Activated CD4-positive, alpha-beta T cell treated with anti-CD3 and anti-CD28 coated beads for 36 hours (primary cell): ENCODE measurements at regions of chr10 and their contacts with region 1.

Region 1: DNA sequence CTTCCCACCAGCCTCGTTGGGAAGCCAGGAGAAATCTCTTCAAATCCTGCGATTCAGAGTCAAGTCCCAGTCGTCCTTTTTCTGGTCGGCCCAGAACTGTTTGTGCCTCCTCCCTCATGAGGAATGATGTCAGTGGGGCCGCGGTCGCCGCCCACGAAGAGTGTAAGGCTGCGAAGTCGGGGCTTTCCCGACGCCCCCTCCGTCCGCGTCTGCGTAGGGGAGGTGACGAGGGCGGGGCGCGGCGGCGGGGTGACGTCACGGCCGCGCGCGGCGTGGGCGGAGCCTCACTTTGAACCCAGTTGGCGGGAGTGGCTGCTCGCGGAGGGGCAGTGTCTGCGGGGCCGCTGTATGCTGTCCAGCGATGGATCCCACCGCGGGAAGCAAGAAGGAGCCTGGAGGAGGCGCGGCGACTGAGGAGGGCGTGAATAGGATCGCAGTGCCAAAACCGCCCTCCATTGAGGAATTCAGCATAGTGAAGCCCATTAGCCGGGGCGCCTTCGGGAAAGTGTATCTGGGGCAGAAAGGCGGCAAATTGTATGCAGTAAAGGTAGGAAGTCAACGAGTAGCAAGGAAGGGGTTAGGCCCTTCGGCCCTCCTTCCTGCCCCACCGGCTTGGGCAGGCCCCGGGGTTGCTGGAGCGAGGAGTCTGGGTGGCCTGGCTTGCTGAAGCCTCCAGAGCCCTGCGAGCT is at the start of gene MASTL:
- DNase-seq: peak; percentile 97
- ATAC-seq: peak; percentile 77
- H3K4me3 Mint-ChIP-seq: peak within 1 kb of the TSS; percentile 94
- H3K27ac Mint-ChIP-seq: peak within 1 kb of the TSS; percentile 99
- H3K4me1 Mint-ChIP-seq: peaks cover 34% of the 10 kb centered on the region
- H3K27me3 Mint-ChIP-seq: no peaks in the 10 kb centered on the region
- total RNA-seq, gene MASTL: 42.1 to 55.3 TPM

Region 2: DNA sequence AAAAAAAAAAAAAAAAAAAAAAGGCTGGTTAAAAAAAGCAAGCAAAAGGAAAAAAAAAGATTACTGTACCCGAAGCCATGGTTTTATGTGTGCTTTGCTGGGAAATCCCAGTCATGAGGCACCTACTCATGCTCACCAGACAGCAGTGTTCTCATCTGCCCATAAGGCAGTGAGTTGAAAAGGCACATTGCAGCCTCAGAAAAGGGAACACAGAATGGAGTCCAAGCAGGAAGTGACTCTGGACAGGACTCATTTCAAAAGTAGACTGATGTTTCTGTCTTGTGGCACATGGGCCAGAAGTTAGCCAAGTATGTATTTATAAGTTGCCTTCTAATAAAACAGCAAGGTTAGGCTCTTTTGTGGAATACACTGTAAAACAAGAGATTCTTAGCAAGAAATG is 417.5 kb before region 1 on chr10:
- CTCF ChIA-PET with region 1: no interaction called
- POLR2A ChIA-PET with region 1: no interaction called
- intact Hi-C with region 1: loop called (anchors 5 to 10 kb)
- DNase-seq: peak; percentile 72
- ATAC-seq: peak; percentile 89
- H3K4me3 Mint-ChIP-seq: no peak overlapping the region
- H3K27ac Mint-ChIP-seq: peak overlapping the region; percentile 96
- H3K4me1 Mint-ChIP-seq: peaks cover 47% of the 10 kb centered on the region
- H3K27me3 Mint-ChIP-seq: no peaks in the 10 kb centered on the region

Region 3: DNA sequence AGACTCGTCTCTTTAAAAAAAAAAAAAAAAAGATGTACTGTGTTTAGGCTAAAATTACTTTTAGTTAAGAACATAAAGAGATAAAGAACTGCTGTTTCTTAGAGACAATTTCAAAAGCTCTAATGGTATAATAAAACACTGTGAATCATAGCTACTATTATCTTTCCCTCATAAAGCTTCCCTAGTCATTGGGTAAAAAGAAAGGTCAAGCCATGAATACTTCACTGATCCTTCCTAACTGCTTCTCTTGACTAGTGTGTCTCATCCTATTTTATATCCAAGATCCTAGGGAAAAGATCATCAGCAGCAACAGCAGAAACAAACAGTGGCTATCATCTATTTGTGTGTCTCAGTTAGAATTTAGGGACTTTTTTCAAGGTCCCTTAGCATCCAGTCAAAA is 11.5 kb before region 1 on chr10:
- CTCF ChIA-PET with region 1: interaction called, 10 read pairs
- POLR2A ChIA-PET with region 1: interaction called, 7 read pairs
- intact Hi-C with region 1: no loop called
- DNase-seq: no peak
- ATAC-seq: no peak
- H3K4me3 Mint-ChIP-seq: no peak overlapping the region
- H3K27ac Mint-ChIP-seq: no peak overlapping the region
- H3K4me1 Mint-ChIP-seq: peaks cover 19% of the 10 kb centered on the region
- H3K27me3 Mint-ChIP-seq: no peaks in the 10 kb centered on the region

Region 4: GRCh38 chr10:27504007-27504807 is 349.0 kb after region 1 on chr10 and contains the start of gene RAB18:
- CTCF ChIA-PET with region 1: no interaction called
- POLR2A ChIA-PET with region 1: interaction called, 6 read pairs
- intact Hi-C with region 1: loop called (anchors 1 to 2 kb)
- DNase-seq: peak; percentile 99
- ATAC-seq: peak; percentile 98
- H3K4me3 Mint-ChIP-seq: peak within 1 kb of the TSS; percentile 93
- H3K27ac Mint-ChIP-seq: peak within 1 kb of the TSS; percentile 93
- H3K4me1 Mint-ChIP-seq: peaks cover 46% of the 10 kb centered on the region
- H3K27me3 Mint-ChIP-seq: no peaks in the 10 kb centered on the region
- total RNA-seq, gene RAB18: 44.6 to 49.3 TPM

Region 5: DNA sequence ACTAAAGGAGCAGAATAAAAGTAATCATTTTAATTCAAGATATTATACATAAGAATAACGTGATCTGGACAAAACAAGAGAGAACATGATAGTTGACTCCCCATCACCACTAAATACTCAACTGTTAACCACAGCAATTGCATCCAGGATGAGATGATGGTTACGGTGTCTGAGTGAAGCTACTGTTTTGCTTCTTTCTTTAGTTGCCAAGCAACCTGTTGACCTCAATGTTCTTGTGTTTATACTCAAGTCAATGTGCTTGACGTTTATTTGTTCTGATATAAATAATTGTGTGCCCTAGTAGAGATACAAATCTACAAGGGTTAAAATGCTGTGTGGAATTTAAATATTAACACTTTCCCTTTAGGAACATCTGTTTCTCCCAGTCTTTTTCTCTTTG is 1179.1 kb after region 1 on chr10:
- CTCF ChIA-PET with region 1: no interaction called
- POLR2A ChIA-PET with region 1: interaction called, 5 read pairs
- intact Hi-C with region 1: loop called in 1 of 2 experiments (anchors 10 kb)
- DNase-seq: peak; percentile 43
- ATAC-seq: peak; percentile 62
- H3K4me3 Mint-ChIP-seq: peak overlapping the region; percentile 79
- H3K27ac Mint-ChIP-seq: peak overlapping the region; percentile 100
- H3K4me1 Mint-ChIP-seq: peaks cover 70% of the 10 kb centered on the region
- H3K27me3 Mint-ChIP-seq: no peaks in the 10 kb centered on the region